ENCODE measurements at regions of chr6 and their contacts with region 1.

Region 1: GRCh38 chr6:155327326-155328073 is 13.2 kb upstream of the TFB1M start:
- DNase-seq: peak; percentile 47 to 65 (median 62)
- H3K4me3 ChIP-seq: no peak overlapping the region
- H3K4me3 Mint-ChIP-seq: no peak overlapping the region
- H3K27ac ChIP-seq: no peak overlapping the region
- H3K27ac Mint-ChIP-seq: peak overlapping the region in 2 of 7 donors; percentile 0 to 64
- H3K4me1 ChIP-seq: no peaks in the 10 kb centered on the region
- H3K4me1 Mint-ChIP-seq: peaks cover 0 to 5% (median 3%) of the 10 kb centered on the region in 4 donors
- H3K27me3 ChIP-seq: no peaks in the 10 kb centered on the region
- H3K27me3 Mint-ChIP-seq: peaks cover 0 to 1% of the 10 kb centered on the region in 2 donors

Region 2: GRCh38 chr6:156410649-156411048 is 1083.1 kb after region 1 on chr6:
- CTCF ChIA-PET with region 1: no interaction called
- POLR2A ChIA-PET with region 1: no interaction called
- intact Hi-C with region 1: loop called (anchors 2 kb)
- DNase-seq: peak in 3 of 5 donors; percentile 11 to 14 (median 13)
- H3K4me3 ChIP-seq: no peak overlapping the region
- H3K4me3 Mint-ChIP-seq: no peak overlapping the region
- H3K27ac ChIP-seq: no peak overlapping the region
- H3K27ac Mint-ChIP-seq: no peak overlapping the region
- H3K4me1 ChIP-seq: no peaks in the 10 kb centered on the region
- H3K4me1 Mint-ChIP-seq: no peaks in the 10 kb centered on the region
- H3K27me3 ChIP-seq: no peaks in the 10 kb centered on the region
- H3K27me3 Mint-ChIP-seq: peaks cover 1% of the 10 kb centered on the region in 2 donors